Heart left ventricle (tissue), 16 donors: ENCODE measurements at regions of chr10 and their contacts with region 1.

Region 1: GRCh38 chr10:112177247-112177646 is 6.3 kb downstream of the GPAM start:
- DNase-seq: no peak
- ATAC-seq: peak; percentile 54 to 85 (median 74)
- H3K4me3 ChIP-seq: no peak overlapping the region
- H3K27ac ChIP-seq: peak overlapping the region in 9 of 12 donors; percentile 0 to 67 (median 57)
- H3K4me1 ChIP-seq: peaks cover 0 to 25% (median 5%) of the 10 kb centered on the region in 12 donors
- H3K27me3 ChIP-seq: no peaks in the 10 kb centered on the region
- CTCF ChIP-seq: no peak
- POLR2A ChIP-seq: no peak

Region 2: GRCh38 chr10:112131346-112131745 is 45.9 kb before region 1 on chr10:
- intact Hi-C with region 1: no loop called
- DNase-seq: no peak
- ATAC-seq: no peak
- H3K4me3 ChIP-seq: no peak overlapping the region
- H3K27ac ChIP-seq: no peak overlapping the region
- H3K4me1 ChIP-seq: peaks cover 0 to 4% (median 0%) of the 10 kb centered on the region in 12 donors
- H3K27me3 ChIP-seq: no peaks in the 10 kb centered on the region
- CTCF ChIP-seq: no peak
- POLR2A ChIP-seq: no peak

Region 3: DNA sequence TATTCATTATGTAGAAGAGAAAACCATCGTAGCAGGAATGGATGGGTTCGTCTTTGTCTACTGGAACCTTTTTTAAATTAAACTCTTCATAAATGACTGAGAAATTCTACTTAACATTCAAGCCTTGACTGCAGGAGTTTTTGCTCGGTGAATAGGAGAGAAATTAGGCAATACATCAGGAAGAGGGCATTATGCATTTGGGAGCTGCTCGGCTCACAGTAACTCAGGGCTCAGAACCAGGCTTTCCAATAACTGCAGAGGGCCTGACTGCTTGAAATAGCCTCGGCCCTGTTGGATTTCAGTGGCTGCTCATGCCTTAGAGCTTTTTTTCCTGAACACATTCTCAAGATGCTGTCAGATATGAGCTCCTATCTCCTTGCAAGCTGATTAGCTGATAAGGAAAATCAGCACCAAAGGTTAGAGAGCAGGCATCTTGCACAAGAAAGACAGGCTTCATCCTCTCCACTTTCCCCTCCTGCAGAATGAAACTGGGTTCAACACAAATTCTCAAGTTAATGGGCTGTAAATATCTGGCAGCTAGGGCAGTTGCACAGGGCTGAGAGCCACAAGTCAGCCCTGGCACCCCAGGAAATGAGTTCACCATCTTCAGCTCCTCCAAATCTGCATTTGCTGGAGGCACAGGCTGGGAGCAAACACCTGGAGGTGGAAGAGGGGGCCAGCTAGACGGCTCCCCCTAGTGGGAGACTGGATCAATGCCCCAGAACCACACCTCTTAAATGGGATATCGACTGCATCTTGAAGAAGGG is 130.3 kb after region 1 on chr10:
- intact Hi-C with region 1: loop called in 6 of 10 experiments (anchors 5 to 10 kb)
- DNase-seq: peak in 2 of 5 donors; percentile 33 to 35
- ATAC-seq: peak in 3 of 4 donors; percentile 59 to 70 (median 65)
- H3K4me3 ChIP-seq: no peak overlapping the region
- H3K27ac ChIP-seq: no peak overlapping the region
- H3K4me1 ChIP-seq: no peaks in the 10 kb centered on the region
- H3K27me3 ChIP-seq: peaks cover 0 to 3% (median 0%) of the 10 kb centered on the region in 9 donors
- CTCF ChIP-seq: peak; percentile 44 to 78 (median 64)
- POLR2A ChIP-seq: no peak

Region 4: GRCh38 chr10:112429147-112429546 is 251.9 kb after region 1 on chr10:
- intact Hi-C with region 1: loop called in 5 of 10 experiments (anchors 2 to 10 kb)
- DNase-seq: no peak
- ATAC-seq: no peak
- H3K4me3 ChIP-seq: no peak overlapping the region
- H3K27ac ChIP-seq: no peak overlapping the region
- H3K4me1 ChIP-seq: no peaks in the 10 kb centered on the region
- H3K27me3 ChIP-seq: no peaks in the 10 kb centered on the region
- CTCF ChIP-seq: no peak
- POLR2A ChIP-seq: no peak

Region 5: GRCh38 chr10:112434988-112435619 is 257.9 kb after region 1 on chr10:
- intact Hi-C with region 1: loop called in 8 of 10 experiments (anchors 2 to 10 kb)
- DNase-seq: no peak
- ATAC-seq: no peak
- H3K4me3 ChIP-seq: no peak overlapping the region
- H3K27ac ChIP-seq: no peak overlapping the region
- H3K4me1 ChIP-seq: no peaks in the 10 kb centered on the region
- H3K27me3 ChIP-seq: no peaks in the 10 kb centered on the region
- CTCF ChIP-seq: peak; percentile 26 to 73 (median 48)
- POLR2A ChIP-seq: no peak

Region 6: DNA sequence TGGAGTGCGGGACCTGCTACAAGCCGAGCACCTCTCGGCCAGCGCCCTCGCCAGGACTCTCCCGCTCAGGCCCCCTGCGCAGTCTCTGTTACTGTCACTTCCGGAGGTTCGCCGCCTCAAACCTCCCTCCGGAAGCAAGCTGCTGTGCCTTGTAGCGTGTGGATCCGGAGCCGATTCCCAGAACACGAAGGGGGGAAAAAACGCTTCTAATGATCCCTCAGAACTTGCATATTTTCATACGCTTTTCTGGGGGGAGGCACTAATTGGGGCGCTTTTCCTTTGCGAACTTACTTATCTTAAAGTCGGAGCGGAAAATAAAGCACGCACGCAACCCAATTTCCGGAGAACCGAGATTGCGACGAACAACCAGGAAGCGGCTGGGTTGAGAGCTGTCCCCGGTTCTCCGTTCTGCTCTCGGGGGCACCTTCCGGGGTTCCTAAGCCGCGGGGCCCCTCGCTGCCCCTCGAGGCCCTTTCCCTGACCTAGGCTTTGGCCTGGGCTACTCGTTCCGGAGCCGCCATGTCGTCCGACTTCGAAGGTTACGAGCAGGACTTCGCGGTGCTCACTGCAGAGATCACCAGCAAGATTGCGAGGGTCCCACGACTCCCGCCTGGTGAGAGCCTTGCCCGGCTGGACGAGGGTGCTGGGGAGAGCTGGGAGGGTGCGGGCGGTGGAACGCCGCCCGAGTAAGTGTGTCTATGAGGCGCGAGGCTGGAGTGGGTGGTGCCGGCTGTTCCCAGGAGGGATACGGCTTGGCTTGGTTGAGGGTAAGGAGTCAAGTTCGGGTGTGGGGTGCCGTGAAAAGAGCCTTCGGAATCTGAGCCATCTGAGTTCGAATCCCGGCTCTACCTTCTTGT is 269.8 kb after region 1 on chr10 and contains the starts of genes VTI1A and ZDHHC6:
- intact Hi-C with region 1: loop called in 3 of 10 experiments (anchors 5 to 10 kb)
- DNase-seq: peak; percentile 84 to 90 (median 89)
- ATAC-seq: peak; percentile 94 to 99 (median 98)
- H3K4me3 ChIP-seq: peak within 1 kb of the TSS; percentile 75 to 100 (median 86)
- H3K27ac ChIP-seq: peak within 1 kb of the TSS; percentile 48 to 97 (median 86)
- H3K4me1 ChIP-seq: peaks cover 0 to 34% (median 25%) of the 10 kb centered on the region in 12 donors
- H3K27me3 ChIP-seq: no peaks in the 10 kb centered on the region
- CTCF ChIP-seq: peak in 4 of 12 donors; percentile 22 to 30 (median 24)
- POLR2A ChIP-seq: no peak
- total RNA-seq, gene VTI1A: 16.8 to 33.1 (median 24.8) TPM
- total RNA-seq, gene ZDHHC6: 10.0 to 20.2 (median 16.5) TPM